PC-3 (cell line): ENCODE measurements at regions of chr1 and their contacts with region 1.

Region 1: GRCh38 chr1:222732216-222733159 is 4.5 kb upstream of the FAM177B start:
- DNase-seq: no peak
- ATAC-seq: no peak
- H3K4me3 ChIP-seq: no peak overlapping the region
- H3K27ac ChIP-seq: no peak overlapping the region
- H3K4me1 ChIP-seq: peaks cover 15% of the 10 kb centered on the region
- H3K27me3 ChIP-seq: no peaks in the 10 kb centered on the region
- CTCF ChIP-seq: no peak

Region 2: GRCh38 chr1:222784916-222785315 is 52.4 kb after region 1 on chr1:
- CTCF ChIA-PET with region 1: no interaction called
- POLR2A ChIA-PET with region 1: no interaction called
- intact Hi-C with region 1: loop called (anchors 2 kb)
- DNase-seq: peak; percentile 90
- ATAC-seq: peak; percentile 66
- H3K4me3 ChIP-seq: no peak overlapping the region
- H3K27ac ChIP-seq: no peak overlapping the region
- H3K4me1 ChIP-seq: peaks cover 24% of the 10 kb centered on the region
- H3K27me3 ChIP-seq: no peaks in the 10 kb centered on the region
- CTCF ChIP-seq: no peak

Region 3: GRCh38 chr1:223001653-223002634 is 269.5 kb after region 1 on chr1:
- CTCF ChIA-PET with region 1: no interaction called
- POLR2A ChIA-PET with region 1: no interaction called
- intact Hi-C with region 1: loop called (anchors 10 kb)
- DNase-seq: peak; percentile 64
- ATAC-seq: peak; percentile 83
- H3K4me3 ChIP-seq: no peak overlapping the region
- H3K27ac ChIP-seq: no peak overlapping the region
- H3K4me1 ChIP-seq: peaks cover 18% of the 10 kb centered on the region
- H3K27me3 ChIP-seq: no peaks in the 10 kb centered on the region
- CTCF ChIP-seq: peak; percentile 70